ENCODE measurements at regions of chr2 and their contacts with region 1.

Region 1: DNA sequence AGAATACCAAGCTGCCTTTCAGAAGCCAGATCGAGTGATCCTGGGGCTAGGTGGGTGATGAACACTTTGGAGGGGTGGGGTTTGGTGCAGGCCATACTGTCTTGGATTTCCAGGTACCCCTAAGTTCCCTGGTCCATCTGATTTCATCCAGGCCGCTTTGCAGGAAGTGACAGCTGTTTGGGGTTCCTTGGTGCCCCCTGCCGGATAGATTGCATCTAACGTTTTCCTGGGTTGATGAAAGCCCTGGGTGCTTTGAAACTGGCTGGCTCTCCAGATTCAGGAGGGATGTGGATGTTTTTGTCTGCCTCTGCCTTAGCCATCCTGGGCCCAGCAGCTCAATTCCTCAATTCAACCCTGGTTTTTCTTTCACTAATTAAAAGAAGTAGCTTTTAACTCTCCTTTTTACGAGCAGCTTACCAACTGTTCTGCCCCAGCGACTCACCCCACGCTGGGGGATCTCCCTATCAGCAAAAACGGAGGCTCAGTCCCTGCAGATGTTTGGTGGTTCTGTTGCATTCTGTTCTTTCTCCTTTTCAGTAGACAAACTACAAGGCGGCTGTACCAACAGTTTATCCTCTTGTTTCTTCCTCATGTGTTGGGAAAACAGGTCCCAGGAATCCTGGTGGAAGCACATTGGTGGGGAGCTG is 37.1 kb downstream of the ARHGEF4 start:
- DNase-seq: peak; percentile 53 to 68
- H3K4me3 ChIP-seq: no peak overlapping the region
- H3K27ac ChIP-seq: no peak overlapping the region
- H3K4me1 ChIP-seq: no peaks in the 10 kb centered on the region
- H3K27me3 ChIP-seq: no peaks in the 10 kb centered on the region
- CTCF ChIP-seq: peak; percentile 80

Region 2: DNA sequence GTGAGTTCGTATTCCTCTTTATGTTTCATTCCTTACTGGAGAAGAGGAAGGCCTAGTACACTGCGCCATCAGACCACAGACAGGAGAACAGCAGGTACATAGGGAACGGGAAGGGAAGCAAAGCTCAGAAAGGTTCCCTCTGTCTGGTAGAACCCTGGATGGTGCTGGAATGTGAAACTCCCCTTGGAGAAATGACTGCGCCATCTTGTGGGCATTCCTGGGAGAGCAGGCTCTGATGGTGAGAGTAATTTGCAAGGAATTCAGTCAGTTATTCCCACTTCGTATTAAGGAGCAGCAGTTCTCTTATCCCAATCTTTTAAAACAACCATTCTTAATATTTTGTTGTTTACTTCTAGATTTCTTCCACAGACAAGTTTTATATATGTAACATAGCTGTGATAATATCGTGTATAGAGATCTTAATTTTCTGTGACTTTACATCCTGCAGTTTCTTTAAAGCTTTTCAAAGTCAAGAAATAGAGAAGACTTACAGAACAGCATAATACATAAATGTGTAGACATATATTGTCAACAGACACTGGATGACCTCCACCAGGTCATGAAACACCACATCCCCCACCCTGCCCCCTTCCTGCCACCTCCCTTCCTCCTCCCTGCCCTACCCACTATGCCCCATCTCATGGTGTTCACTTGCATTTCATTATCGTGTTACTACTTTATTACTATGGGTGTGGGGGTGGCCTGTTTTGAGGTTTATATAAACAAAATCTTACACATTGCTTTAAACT is 46.8 kb after region 1 on chr2:
- CTCF ChIA-PET with region 1: no interaction called
- POLR2A ChIA-PET with region 1: no interaction called
- intact Hi-C with region 1: loop called (anchors 1 kb)
- DNase-seq: peak; percentile 61 to 71
- H3K4me3 ChIP-seq: no peak overlapping the region
- H3K27ac ChIP-seq: no peak overlapping the region
- H3K4me1 ChIP-seq: no peaks in the 10 kb centered on the region
- H3K27me3 ChIP-seq: no peaks in the 10 kb centered on the region
- CTCF ChIP-seq: peak; percentile 92